Activated CD4-positive, alpha-beta T cell treated with anti-CD3 and anti-CD28 coated beads for 36 hours (primary cell): ENCODE measurements at regions of chr10 and their contacts with region 1.

Region 1: DNA sequence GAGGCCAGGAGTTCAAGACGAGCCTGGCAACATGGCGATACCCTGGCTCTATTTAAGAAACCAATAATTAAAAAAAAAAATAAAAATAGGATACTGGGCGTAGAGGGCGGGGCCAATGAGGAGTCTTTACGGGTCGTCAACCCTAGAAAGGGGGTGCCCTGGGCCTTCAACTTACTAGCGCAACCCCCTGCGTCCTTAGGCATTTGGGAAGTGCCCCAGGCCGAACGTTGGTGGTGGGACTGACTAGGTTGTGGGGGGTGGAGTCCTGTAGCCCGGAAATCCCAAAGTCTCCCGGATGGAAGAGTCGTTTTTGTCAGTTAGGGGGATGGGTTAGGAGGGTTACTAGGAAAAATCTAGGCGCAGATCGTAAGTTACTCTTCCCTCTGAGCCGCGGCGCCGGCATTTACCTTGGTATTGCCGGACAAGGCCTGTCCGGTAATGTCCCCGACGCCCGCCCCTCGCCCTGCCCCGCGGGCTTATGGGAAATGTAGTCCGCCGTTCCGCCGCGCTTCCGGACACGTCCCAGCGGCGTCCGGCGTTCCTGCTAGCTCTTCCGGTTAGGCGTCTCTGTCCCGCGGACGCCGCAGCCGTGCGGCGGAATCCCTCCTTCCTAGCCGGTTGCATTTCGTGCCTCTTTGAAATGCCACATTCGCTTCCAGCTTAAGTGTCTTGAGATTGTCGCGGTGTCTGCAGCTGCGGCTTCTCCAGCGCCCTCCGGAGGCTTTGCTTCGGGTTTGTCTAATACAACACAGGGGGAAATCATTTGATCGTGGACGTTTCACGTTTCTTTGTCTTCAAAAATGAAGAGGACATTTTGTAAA is 1.3 kb upstream of the ACBD5 start:
- DNase-seq: peak; percentile 94
- ATAC-seq: peak; percentile 71
- H3K4me3 Mint-ChIP-seq: peak overlapping the region; percentile 98
- H3K27ac Mint-ChIP-seq: peak overlapping the region; percentile 100
- H3K4me1 Mint-ChIP-seq: peaks cover 28% of the 10 kb centered on the region
- H3K27me3 Mint-ChIP-seq: no peaks in the 10 kb centered on the region

Region 2: GRCh38 chr10:26697163-26697921 is 544.5 kb before region 1 on chr10 and contains the start of gene PDSS1:
- CTCF ChIA-PET with region 1: no interaction called
- POLR2A ChIA-PET with region 1: no interaction called
- intact Hi-C with region 1: loop called in 1 of 2 experiments (anchors 5 kb)
- DNase-seq: peak; percentile 79
- ATAC-seq: peak; percentile 78
- H3K4me3 Mint-ChIP-seq: peak within 1 kb of the TSS; percentile 91
- H3K27ac Mint-ChIP-seq: peak within 1 kb of the TSS; percentile 95
- H3K4me1 Mint-ChIP-seq: peaks cover 32% of the 10 kb centered on the region
- H3K27me3 Mint-ChIP-seq: no peaks in the 10 kb centered on the region
- total RNA-seq, gene PDSS1: 16.1 to 20.7 TPM

Region 3: GRCh38 chr10:27223964-27224363 is 17.9 kb before region 1 on chr10:
- CTCF ChIA-PET with region 1: interaction called, 16 read pairs
- POLR2A ChIA-PET with region 1: no interaction called
- intact Hi-C with region 1: no loop called
- DNase-seq: peak; percentile 65
- ATAC-seq: peak; percentile 73
- H3K4me3 Mint-ChIP-seq: no peak overlapping the region
- H3K27ac Mint-ChIP-seq: no peak overlapping the region
- H3K4me1 Mint-ChIP-seq: peaks cover 8% of the 10 kb centered on the region
- H3K27me3 Mint-ChIP-seq: no peaks in the 10 kb centered on the region

Region 4: DNA sequence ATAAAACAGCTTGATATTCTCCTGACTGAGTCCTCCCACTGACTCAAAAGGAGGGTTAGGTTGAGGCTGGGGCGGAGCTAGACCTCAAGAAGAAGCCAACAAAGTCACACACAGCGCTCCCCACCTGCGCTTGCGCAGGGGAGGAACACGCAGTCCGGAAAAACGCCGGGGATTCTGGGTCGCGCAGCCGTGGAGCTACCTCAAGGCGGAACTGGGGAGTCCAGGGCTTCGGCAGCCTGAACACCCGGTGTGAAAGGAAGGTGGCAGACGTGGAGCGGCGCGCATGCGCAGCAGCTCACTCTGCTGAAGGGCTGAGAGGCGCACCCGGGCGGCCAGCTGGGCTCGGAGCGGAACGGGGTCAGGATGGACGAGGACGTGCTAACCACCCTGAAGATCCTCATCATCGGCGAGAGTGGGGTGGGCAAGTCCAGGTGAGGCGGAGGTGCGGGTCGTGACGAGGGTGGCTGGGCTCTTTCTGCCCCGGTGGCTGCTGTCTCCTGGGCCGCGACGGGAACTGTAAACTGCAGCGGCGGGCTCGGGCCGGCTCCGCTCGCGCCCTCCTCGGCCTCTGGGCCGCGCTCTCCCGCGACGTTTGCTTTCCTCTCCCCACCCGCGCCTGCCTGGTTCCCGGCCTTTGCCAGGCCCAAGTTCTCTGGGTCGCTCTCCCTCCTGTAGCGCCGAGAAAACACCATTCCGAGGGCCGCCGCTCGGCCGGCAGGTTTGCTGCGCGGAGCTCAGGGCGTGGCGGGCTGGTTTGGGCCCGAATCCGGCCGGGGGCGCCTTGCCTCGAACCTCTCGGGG is 262.3 kb after region 1 on chr10 and contains the start of gene RAB18:
- CTCF ChIA-PET with region 1: no interaction called
- POLR2A ChIA-PET with region 1: no interaction called
- intact Hi-C with region 1: loop called (anchors 1 to 5 kb)
- DNase-seq: peak; percentile 99
- ATAC-seq: peak; percentile 98
- H3K4me3 Mint-ChIP-seq: peak within 1 kb of the TSS; percentile 93
- H3K27ac Mint-ChIP-seq: peak within 1 kb of the TSS; percentile 93
- H3K4me1 Mint-ChIP-seq: peaks cover 46% of the 10 kb centered on the region
- H3K27me3 Mint-ChIP-seq: no peaks in the 10 kb centered on the region
- total RNA-seq, gene RAB18: 44.6 to 49.3 TPM

Region 5: DNA sequence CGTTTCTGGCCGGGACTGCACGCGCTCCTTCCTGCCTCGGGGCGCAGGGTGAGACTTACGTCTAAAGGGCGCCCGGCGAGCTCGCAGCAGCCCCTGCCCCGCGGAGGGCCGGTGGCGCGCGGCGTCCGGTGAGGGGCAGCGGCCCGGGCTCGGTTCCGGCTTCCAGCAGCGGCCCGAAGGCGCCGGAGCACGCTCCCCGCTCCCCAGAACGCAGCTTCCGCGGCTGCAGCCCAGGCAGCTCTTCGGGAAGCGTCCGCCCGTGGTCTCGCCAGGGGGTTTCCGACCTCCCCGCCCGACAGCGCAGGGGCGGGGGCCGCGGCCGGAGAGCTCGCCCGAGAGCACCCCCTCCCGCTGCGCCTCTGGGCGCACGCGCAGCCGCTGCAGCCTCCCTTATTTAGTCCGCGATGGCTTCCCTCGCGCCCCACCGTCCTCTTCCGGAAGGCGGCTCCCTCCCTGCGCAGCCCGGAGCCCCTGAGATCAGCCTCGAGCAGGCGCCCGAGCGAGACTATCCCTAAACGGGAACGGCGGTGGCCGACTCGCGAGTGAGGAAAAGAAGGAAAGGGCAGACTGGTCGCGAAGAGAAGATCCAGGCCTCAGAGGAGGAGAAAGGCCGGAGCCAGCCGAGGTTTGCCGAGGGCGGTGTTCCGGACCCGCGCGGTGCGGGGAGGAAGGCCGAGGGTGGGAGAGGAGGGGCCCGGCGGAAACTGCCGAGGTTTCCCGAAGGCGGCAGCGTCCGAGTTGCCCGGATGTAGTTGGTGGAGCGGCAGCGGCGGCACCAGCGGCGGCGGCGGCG is 1290.7 kb after region 1 on chr10 and contains the start of gene WAC:
- CTCF ChIA-PET with region 1: no interaction called
- POLR2A ChIA-PET with region 1: no interaction called
- intact Hi-C with region 1: loop called (anchors 1 to 5 kb)
- DNase-seq: peak; percentile 99
- ATAC-seq: peak; percentile 88
- H3K4me3 Mint-ChIP-seq: peak within 1 kb of the TSS; percentile 95
- H3K27ac Mint-ChIP-seq: peak within 1 kb of the TSS; percentile 100
- H3K4me1 Mint-ChIP-seq: peaks cover 56% of the 10 kb centered on the region
- H3K27me3 Mint-ChIP-seq: no peaks in the 10 kb centered on the region
- total RNA-seq, gene WAC: 103 to 136 TPM